Sciatic nerve (tissue), 2 donors: ENCODE measurements at regions of chr7 and their contacts with region 1.

Region 1: GRCh38 chr7:63998549-63998948 is at the start of gene ZNF722:
- DNase-seq: no peak
- ATAC-seq: no peak
- total RNA-seq, gene ZNF722: not detected

Region 2: DNA sequence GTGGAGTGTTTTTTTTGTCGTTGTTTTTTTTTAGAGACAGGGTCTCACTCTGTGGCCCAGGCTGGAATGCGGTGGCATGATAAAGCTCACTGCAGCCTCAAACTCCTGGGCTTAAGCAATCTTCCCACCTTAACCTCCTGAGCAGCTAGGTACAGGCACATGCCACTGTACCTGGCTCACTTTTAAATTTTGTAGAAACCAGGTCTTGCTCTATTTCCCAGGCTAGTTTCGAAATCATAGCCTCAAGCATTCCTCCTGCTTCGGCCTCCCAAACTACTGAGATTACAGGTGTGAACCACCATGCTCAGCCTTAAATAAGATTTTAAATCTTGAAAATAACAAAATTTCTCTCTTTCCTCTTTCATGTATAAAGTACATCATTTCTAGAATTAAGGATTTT is 152.4 kb before region 1 on chr7:
- intact Hi-C with region 1: loop called (anchors 5 kb)
- DNase-seq: no peak
- ATAC-seq: no peak

Region 3: DNA sequence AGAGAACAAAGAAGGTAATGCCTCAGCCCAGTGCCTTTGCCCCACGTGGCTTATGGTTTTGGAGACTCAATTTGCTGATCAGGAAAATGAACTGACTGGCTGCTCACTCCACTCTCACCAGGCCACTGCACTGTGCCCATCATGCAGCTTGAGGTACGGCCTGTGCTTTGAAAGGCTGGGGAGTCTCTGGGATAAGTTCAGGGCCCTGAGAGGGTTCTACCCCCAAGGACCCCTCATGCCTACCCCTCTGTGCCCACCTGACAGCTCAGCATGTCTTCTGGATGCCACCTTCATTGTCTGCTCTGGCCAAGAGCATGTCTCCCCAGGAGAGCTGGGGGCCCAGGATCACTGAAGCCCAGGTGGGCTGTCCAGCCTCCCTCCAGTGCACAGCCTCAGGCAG is 45.4 kb before region 1 on chr7:
- intact Hi-C with region 1: no loop called
- DNase-seq: no peak
- ATAC-seq: no peak